HCT116 (cell line): ENCODE measurements at regions of chr1 and their contacts with region 1.

Region 1: GRCh38 chr1:16009030-16009709 is 5.1 kb downstream of the SRARP start:
- DNase-seq: peak; percentile 64
- ATAC-seq: peak; percentile 73
- H3K4me3 ChIP-seq: no peak overlapping the region
- H3K27ac ChIP-seq: no peak overlapping the region
- H3K4me1 ChIP-seq: peaks cover 10 to 28% of the 10 kb centered on the region in 2 experiments
- H3K27me3 ChIP-seq: no peaks in the 10 kb centered on the region
- CTCF ChIP-seq: peak; percentile 95 to 99 (median 95)
- POLR2A ChIP-seq: no peak
- RAD21 ChIP-seq: peak; percentile 99

Region 2: DNA sequence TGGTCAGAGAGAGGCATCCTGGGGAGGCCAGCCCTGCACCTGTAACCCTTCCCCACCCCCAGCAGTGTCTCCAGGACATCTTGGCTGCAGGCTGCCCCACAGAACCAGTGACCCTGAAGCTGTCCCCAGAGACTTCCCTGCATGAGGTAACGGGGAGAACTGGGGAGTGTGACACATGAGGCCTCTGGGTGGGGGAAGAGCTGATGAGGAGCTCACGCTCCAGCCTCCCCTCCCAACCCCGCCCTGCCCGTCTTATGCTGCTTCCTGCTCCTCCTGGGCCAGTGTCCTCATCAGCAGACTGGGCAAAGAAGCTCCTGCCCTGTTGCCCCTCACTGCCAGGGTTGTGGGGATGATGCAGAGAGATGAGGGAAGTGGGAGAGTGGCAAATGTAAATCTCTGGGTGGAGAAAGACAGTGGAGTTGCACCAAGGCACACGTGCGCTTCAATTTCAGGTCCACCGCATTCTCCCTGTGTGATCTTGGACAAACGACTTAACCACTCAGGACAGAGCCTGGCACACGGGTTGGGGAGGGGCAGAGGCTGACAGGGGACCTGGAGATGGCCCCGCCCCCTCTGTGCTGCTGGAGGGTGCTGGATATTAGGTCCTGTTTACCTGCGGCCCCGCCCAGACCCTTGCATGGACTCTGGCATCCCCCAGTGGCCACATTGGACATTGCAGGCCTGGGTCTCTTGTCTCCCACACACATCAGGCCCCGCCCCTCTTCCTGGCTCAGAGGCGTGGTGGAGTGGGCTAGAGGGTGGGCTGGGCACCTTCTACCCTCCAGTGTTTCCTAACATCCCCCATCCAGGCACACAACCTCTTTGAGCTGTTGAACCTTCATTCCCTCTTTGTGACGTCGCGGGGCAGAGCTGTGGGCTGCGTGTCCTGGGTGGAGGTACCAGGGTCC is 46.7 kb after region 1 on chr1:
- CTCF ChIA-PET with region 1: interaction called, 3 read pairs
- POLR2A ChIA-PET with region 1: no interaction called
- RAD21 ChIA-PET with region 1: interaction called in 1 of 2 experiments, 3 read pairs
- intact Hi-C with region 1: loop called (anchors 1 kb)
- DNase-seq: peak; percentile 87
- ATAC-seq: peak; percentile 95
- H3K4me3 ChIP-seq: no peak overlapping the region
- H3K27ac ChIP-seq: no peak overlapping the region
- H3K4me1 ChIP-seq: peaks cover 4 to 9% of the 10 kb centered on the region in 2 experiments; a peak in 3 of 4 replicates
- H3K27me3 ChIP-seq: no peaks in the 10 kb centered on the region
- CTCF ChIP-seq: peak; percentile 86 to 96 (median 88)
- POLR2A ChIP-seq: no peak
- RAD21 ChIP-seq: peak; percentile 97

Region 3: DNA sequence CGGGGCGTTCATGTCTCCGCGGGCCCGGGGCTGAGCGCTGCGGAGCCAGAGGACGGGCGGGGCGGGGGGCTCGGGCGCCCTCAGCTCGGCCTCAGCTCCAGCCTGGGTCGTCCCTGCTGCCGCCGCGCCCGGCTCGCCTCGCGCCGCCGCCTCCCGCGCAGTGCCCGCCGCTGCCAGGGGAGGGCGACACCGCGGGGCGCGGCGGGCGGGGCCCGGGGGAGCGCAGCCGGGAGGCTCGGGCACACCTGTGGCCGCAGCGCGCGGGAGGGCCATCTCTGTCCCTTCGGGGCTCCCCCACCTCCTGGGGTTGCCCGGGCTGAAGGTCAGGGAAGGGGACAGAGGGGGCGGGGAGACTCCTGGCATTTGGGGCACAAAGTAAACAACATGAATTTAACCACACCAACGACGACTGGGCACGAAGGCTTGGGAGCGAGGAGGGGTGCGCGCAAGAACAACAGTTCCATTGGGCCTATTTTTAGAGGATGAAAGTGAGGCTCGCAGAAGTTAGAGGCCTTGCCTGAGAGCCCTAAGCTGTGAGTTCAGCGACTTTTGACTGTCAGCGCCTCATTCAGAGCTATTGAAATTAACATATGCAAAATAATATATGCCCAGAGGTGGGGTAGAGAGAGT is 64.4 kb after region 1 on chr1 and contains the start of gene FAM131C:
- CTCF ChIA-PET with region 1: interaction called, 4 read pairs
- POLR2A ChIA-PET with region 1: no interaction called
- RAD21 ChIA-PET with region 1: no interaction called
- intact Hi-C with region 1: loop called (anchors 2 kb)
- DNase-seq: no peak
- ATAC-seq: peak; percentile 75
- H3K4me3 ChIP-seq: peak within 1 kb of the TSS; percentile 53 to 70
- H3K27ac ChIP-seq: peak within 1 kb of the TSS; percentile 48; the same call in 1 of the 2 replicates
- H3K4me1 ChIP-seq: peaks cover 27 to 61% of the 10 kb centered on the region in 2 experiments
- H3K27me3 ChIP-seq: no peaks in the 10 kb centered on the region
- CTCF ChIP-seq: peak in 2 of 3 experiments; percentile 12 to 30; a peak in 2 of 6 replicates
- POLR2A ChIP-seq: peak; percentile 96
- RAD21 ChIP-seq: no peak
- total RNA-seq, gene FAM131C: 11.6 TPM